ENCODE measurements at regions of chr10 and their contacts with region 1.

Region 1: GRCh38 chr10:23994479-23995046 is 214.4 kb upstream of the KIAA1217 start:
- DNase-seq: peak in 5 of 6 donors; percentile 50 to 77 (median 54)
- ATAC-seq: peak; percentile 77 to 98 (median 94)
- H3K4me3 ChIP-seq: no peak overlapping the region
- H3K27ac ChIP-seq: no peak overlapping the region
- H3K4me1 ChIP-seq: no peaks in the 10 kb centered on the region
- H3K27me3 ChIP-seq: no peaks in the 10 kb centered on the region
- CTCF ChIP-seq: peak; percentile 80 to 91 (median 88)

Region 2: DNA sequence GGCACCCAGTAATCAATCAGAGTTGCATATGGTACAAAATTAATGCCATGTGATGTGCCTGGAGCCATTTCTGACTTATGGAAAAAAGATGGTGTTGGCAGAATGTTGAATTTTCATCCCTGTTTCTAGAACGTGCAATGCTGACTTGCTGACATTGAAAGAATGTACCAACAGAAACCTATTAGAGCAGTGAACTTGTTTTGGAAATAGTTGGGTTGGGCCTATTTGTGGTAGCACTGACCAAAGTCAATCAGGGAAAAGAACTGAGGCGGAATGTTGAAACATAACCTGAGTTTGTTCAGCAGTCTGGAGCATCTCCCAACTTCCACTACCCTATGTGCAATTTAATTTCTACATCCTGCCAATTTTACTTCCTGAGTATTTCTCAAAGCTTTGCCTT is 202.7 kb after region 1 on chr10:
- intact Hi-C with region 1: loop called in 2 of 3 experiments (anchors 5 kb)
- DNase-seq: no peak
- ATAC-seq: no peak
- H3K4me3 ChIP-seq: no peak overlapping the region
- H3K27ac ChIP-seq: no peak overlapping the region
- H3K4me1 ChIP-seq: no peaks in the 10 kb centered on the region
- H3K27me3 ChIP-seq: no peaks in the 10 kb centered on the region
- CTCF ChIP-seq: no peak

Region 3: DNA sequence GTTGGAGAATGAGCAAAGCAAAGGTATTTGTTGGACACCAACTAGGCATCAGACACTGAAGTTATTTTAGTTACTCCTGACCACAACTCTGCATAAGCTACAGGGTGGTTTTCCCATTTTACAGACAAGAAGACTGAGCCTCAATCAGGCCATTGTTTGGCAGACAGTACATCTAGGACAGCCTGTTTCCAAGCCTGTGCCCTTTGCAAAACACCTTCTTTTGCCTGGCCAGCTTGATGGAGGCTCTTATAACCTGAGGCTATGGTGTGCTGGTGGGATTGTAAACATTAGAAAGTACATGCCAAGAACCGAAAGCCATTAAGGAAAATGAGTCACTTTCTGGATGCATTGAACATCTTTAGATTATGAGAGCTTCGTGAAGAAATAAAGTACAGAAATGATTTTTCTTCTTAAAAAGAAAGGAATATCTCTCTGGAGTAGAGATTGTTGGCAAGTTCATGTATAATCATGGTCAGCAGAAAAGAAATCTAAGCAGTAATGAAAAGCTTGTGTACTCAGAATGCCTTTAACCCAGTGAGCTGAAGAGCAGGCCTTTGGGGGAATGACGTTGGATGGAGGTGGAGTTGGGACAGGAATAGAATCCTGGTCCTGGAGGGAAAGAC is 354.9 kb after region 1 on chr10:
- intact Hi-C with region 1: loop called in 1 of 3 experiments (anchors 10 kb)
- DNase-seq: no peak
- ATAC-seq: no peak
- H3K4me3 ChIP-seq: no peak overlapping the region
- H3K27ac ChIP-seq: no peak overlapping the region
- H3K4me1 ChIP-seq: peaks cover 0 to 22% (median 12%) of the 10 kb centered on the region in 3 donors
- H3K27me3 ChIP-seq: no peaks in the 10 kb centered on the region
- CTCF ChIP-seq: no peak

Region 4: GRCh38 chr10:24360282-24361127 is 365.9 kb after region 1 on chr10:
- intact Hi-C with region 1: loop called in 2 of 3 experiments (anchors 10 kb)
- DNase-seq: peak in 5 of 6 donors; percentile 47 to 81 (median 59)
- ATAC-seq: peak; percentile 79 to 93 (median 92)
- H3K4me3 ChIP-seq: no peak overlapping the region
- H3K27ac ChIP-seq: no peak overlapping the region
- H3K4me1 ChIP-seq: no peaks in the 10 kb centered on the region
- H3K27me3 ChIP-seq: no peaks in the 10 kb centered on the region
- CTCF ChIP-seq: peak; percentile 33 to 57 (median 47)

Region 5: DNA sequence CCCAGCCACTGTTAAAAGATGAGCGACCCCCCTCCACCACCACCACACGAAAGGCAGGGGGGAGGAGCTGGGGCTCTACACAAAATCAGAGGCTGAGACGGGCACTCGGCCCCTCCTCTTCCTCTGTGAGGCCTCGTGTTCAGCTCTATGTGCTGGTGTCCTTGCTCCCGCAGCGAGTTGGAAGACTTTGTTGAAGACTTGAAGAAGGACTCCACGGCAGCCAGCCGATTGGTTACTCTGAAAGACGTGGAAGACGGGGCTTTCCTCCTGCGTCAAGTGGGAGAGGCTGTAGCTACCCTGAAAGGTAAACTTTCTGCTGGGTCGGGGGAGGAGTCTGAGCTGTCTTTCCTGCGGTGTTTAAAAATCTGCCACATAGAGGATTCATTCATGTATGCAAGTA is 525.4 kb after region 1 on chr10:
- intact Hi-C with region 1: loop called in 1 of 3 experiments (anchors 10 kb)
- DNase-seq: no peak
- ATAC-seq: no peak
- H3K4me3 ChIP-seq: no peak overlapping the region
- H3K27ac ChIP-seq: no peak overlapping the region
- H3K4me1 ChIP-seq: no peaks in the 10 kb centered on the region
- H3K27me3 ChIP-seq: no peaks in the 10 kb centered on the region
- CTCF ChIP-seq: no peak

Measured in pancreas (tissue), 10 donors.